Activated CD8-positive, alpha-beta T cell treated with anti-CD3 and anti-CD28 coated beads, Interleukin-2, amount 10 ng/mL, durations not matched to agents 7 days and 5 days (primary cell): ENCODE measurements at regions of chr5 and their contacts with region 1.

Region 1: GRCh38 chr5:10441992-10442435 is 335 bp downstream of the ROPN1L start:
- DNase-seq: no peak
- ATAC-seq: peak; percentile 61
- H3K4me3 Mint-ChIP-seq: peak overlapping the region; percentile 81
- H3K27ac Mint-ChIP-seq: no peak overlapping the region
- H3K4me1 Mint-ChIP-seq: peaks cover 45% of the 10 kb centered on the region
- H3K27me3 Mint-ChIP-seq: peaks cover 6% of the 10 kb centered on the region

Region 2: GRCh38 chr5:10452768-10453331 is 10.8 kb after region 1 on chr5:
- CTCF ChIA-PET with region 1: interaction called, 15 read pairs
- POLR2A ChIA-PET with region 1: interaction called, 3 read pairs
- DNase-seq: peak; percentile 53
- ATAC-seq: peak; percentile 79
- H3K4me3 Mint-ChIP-seq: no peak overlapping the region
- H3K27ac Mint-ChIP-seq: no peak overlapping the region
- H3K4me1 Mint-ChIP-seq: peaks cover 16% of the 10 kb centered on the region
- H3K27me3 Mint-ChIP-seq: no peaks in the 10 kb centered on the region